Activated B cell treated with CpG ODN at 0.5 μM for 24 hours (primary cell): ENCODE measurements at regions of chr5 and their contacts with region 1.

Region 1: GRCh38 chr5:173293817-173294672 is 34.2 kb downstream of the STC2 start:
- DNase-seq: peak; percentile 53
- ATAC-seq: peak; percentile 69
- H3K4me3 Mint-ChIP-seq: no peak overlapping the region
- H3K27ac Mint-ChIP-seq: no peak overlapping the region
- H3K4me1 Mint-ChIP-seq: peaks cover 11% of the 10 kb centered on the region
- H3K27me3 Mint-ChIP-seq: peaks cover 41% of the 10 kb centered on the region
- CTCF ChIP-seq: no peak

Region 2: DNA sequence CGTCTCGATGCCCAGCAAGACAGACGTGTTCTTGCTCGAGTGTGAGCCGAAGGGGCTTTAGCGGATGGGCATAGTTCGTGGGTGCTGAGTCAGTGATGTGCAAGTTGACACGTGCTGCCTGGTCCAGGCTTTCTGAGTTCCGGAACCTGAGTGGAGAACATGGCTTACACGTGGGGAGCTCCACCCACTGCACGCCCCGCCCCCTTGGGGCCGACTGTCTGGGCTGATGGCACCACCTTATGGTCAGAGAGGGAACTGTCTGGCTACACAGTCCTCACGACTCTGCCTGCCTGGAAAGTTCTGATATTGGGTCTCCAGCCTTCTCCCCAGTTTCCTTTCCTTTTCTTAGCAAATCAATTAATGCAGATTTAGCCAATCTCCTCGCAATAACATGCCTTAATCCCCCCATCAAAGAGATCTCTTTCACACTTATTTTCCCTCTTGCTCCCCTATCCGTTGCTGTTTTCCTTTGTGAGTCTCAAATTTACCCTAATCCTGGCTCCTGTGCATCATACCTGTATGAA is 38.0 kb after region 1 on chr5:
- CTCF ChIA-PET with region 1: interaction called, 7 read pairs
- POLR2A ChIA-PET with region 1: no interaction called
- intact Hi-C with region 1: loop called (anchors 5 kb)
- DNase-seq: peak; percentile 36
- ATAC-seq: peak; percentile 73
- H3K4me3 Mint-ChIP-seq: no peak overlapping the region
- H3K27ac Mint-ChIP-seq: no peak overlapping the region
- H3K4me1 Mint-ChIP-seq: peaks cover 12% of the 10 kb centered on the region
- H3K27me3 Mint-ChIP-seq: peaks cover 50% of the 10 kb centered on the region
- CTCF ChIP-seq: no peak

Region 3: DNA sequence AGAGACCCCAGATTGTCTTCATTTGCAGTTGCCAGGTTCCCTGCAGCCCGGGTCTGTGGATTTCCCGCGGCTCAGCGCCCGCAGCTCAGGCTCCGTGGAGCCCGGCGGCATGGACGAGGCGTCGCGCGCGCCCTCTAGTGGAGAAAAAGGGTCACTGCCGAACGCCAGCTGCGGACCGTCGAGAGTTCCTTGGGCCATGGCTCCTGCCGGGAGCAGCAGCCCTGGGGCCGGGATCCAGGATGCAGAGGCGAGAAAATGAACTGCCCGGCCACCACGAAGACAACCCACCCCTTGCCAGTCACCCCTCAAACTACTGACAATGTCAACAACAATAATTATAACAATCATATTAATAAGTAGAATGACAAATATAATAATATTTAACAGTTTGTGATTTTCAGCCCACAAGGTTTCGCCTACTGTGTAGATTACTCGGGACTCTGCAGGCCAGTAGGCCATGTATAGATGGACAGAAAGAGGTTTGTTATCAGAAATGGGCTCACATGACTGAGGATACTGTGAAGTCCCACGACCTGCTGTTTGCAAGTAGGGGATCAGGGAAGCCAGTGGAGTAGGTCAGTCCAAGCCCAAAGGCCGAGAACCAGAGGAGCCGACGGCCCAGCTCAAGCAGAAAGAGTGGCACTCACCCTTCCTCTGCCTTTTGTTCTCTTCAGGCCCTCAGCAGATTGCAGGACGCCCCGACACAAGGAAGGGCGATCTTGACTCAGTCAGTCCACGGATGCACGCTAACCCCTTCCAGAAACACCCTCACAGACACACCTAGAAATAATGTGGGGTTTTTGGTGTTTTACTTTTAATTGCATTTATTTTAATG is 279.3 kb after region 1 on chr5:
- CTCF ChIA-PET with region 1: no interaction called
- POLR2A ChIA-PET with region 1: no interaction called
- intact Hi-C with region 1: loop called (anchors 1 kb)
- DNase-seq: peak; percentile 42
- ATAC-seq: peak; percentile 73
- H3K4me3 Mint-ChIP-seq: no peak overlapping the region
- H3K27ac Mint-ChIP-seq: no peak overlapping the region
- H3K4me1 Mint-ChIP-seq: peaks cover 7% of the 10 kb centered on the region
- H3K27me3 Mint-ChIP-seq: peaks cover 27% of the 10 kb centered on the region
- CTCF ChIP-seq: peak; percentile 97

Region 4: GRCh38 chr5:173602423-173602822 is 308.4 kb after region 1 on chr5:
- CTCF ChIA-PET with region 1: no interaction called
- POLR2A ChIA-PET with region 1: no interaction called
- intact Hi-C with region 1: no loop called
- DNase-seq: no peak
- ATAC-seq: no peak
- H3K4me3 Mint-ChIP-seq: no peak overlapping the region
- H3K27ac Mint-ChIP-seq: no peak overlapping the region
- H3K4me1 Mint-ChIP-seq: no peaks in the 10 kb centered on the region
- H3K27me3 Mint-ChIP-seq: no peaks in the 10 kb centered on the region
- CTCF ChIP-seq: no peak